ENCODE measurements at regions of chr19 and their contacts with region 1.

Region 1: GRCh38 chr19:44845612-44846454 is at the start of gene NECTIN2:
- DNase-seq: peak; percentile 68
- ATAC-seq: peak; percentile 73
- H3K4me3 Mint-ChIP-seq: peak within 1 kb of the TSS; percentile 89
- H3K27ac Mint-ChIP-seq: peak within 1 kb of the TSS; percentile 38
- H3K4me1 Mint-ChIP-seq: peaks cover 31% of the 10 kb centered on the region
- H3K27me3 Mint-ChIP-seq: peaks cover 32% of the 10 kb centered on the region
- CTCF ChIP-seq: no peak
- total RNA-seq, gene NECTIN2: 0.17 and 0.35 TPM in 2 replicates

Region 2: GRCh38 chr19:43675269-43675879 is 1170.5 kb before region 1 on chr19:
- CTCF ChIA-PET with region 1: no interaction called
- POLR2A ChIA-PET with region 1: interaction called, 12 read pairs
- intact Hi-C with region 1: no loop called
- DNase-seq: no peak
- ATAC-seq: no peak
- H3K4me3 Mint-ChIP-seq: no peak overlapping the region
- H3K27ac Mint-ChIP-seq: no peak overlapping the region
- H3K4me1 Mint-ChIP-seq: peaks cover 4% of the 10 kb centered on the region
- H3K27me3 Mint-ChIP-seq: no peaks in the 10 kb centered on the region
- CTCF ChIP-seq: no peak

Region 3: GRCh38 chr19:44653977-44654774 is 191.7 kb before region 1 on chr19:
- CTCF ChIA-PET with region 1: interaction called, 3 read pairs
- POLR2A ChIA-PET with region 1: no interaction called
- intact Hi-C with region 1: loop called (anchors 1 kb)
- DNase-seq: peak; percentile 62
- ATAC-seq: peak; percentile 94
- H3K4me3 Mint-ChIP-seq: no peak overlapping the region
- H3K27ac Mint-ChIP-seq: peak overlapping the region; percentile 53
- H3K4me1 Mint-ChIP-seq: peaks cover 21% of the 10 kb centered on the region
- H3K27me3 Mint-ChIP-seq: no peaks in the 10 kb centered on the region
- CTCF ChIP-seq: no peak

Region 4: DNA sequence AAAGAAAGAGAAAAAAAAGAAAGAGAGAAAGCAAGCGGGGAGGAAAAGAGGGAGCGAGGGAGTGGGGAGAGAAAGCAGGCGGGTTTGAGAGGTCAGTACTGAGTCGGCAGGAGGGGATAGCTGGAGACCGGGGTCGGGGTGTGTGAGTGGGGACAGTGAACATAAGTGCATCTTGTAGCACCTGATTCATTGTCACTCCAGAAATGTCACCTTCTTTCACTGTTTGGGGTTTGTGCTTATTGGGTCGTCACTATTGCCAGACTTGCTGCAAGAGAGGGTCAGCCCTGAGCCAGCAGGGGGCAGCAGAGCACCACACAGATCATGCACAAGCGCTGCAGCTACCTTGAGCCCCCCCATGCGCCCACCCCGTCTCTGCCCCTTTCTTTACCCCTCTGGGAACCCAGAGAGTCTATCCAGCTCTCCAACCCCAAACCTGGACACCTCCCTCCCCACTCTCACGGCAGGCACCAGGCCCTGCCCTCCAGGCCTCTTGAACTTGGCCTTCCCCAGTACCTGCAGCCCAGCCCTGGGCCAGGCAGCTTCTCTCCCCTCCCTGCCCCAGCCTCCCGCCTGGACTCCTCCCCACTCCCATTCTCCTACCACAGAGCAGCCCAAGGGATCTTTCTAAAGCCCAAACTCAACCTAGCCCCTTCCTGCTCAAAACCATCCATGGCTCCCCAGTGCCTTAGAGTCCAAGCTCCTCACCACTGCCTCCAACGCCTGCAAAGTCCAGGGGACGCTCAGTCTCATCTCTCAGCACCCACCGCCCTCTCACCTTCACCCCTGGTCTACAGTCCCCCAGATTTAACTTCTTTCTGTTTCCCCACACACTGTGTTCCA is 156.6 kb before region 1 on chr19:
- CTCF ChIA-PET with region 1: interaction called, 6 read pairs
- POLR2A ChIA-PET with region 1: no interaction called
- intact Hi-C with region 1: loop called (anchors 1 kb)
- DNase-seq: peak; percentile 73
- ATAC-seq: peak; percentile 51
- H3K4me3 Mint-ChIP-seq: no peak overlapping the region
- H3K27ac Mint-ChIP-seq: no peak overlapping the region
- H3K4me1 Mint-ChIP-seq: peaks cover 51% of the 10 kb centered on the region
- H3K27me3 Mint-ChIP-seq: peaks cover 11% of the 10 kb centered on the region
- CTCF ChIP-seq: no peak

Region 5: GRCh38 chr19:44782729-44783128 is 63.1 kb before region 1 on chr19:
- CTCF ChIA-PET with region 1: no interaction called
- POLR2A ChIA-PET with region 1: no interaction called
- intact Hi-C with region 1: loop called (anchors 1 kb)
- DNase-seq: no peak
- ATAC-seq: no peak
- H3K4me3 Mint-ChIP-seq: no peak overlapping the region
- H3K27ac Mint-ChIP-seq: no peak overlapping the region
- H3K4me1 Mint-ChIP-seq: peaks cover 6% of the 10 kb centered on the region
- H3K27me3 Mint-ChIP-seq: peaks cover 7% of the 10 kb centered on the region
- CTCF ChIP-seq: no peak

Region 6: GRCh38 chr19:44800461-44800860 is 45.4 kb before region 1 on chr19:
- CTCF ChIA-PET with region 1: no interaction called
- POLR2A ChIA-PET with region 1: no interaction called
- intact Hi-C with region 1: loop called (anchors 2 kb)
- DNase-seq: peak; percentile 70
- ATAC-seq: peak; percentile 92
- H3K4me3 Mint-ChIP-seq: no peak overlapping the region
- H3K27ac Mint-ChIP-seq: no peak overlapping the region
- H3K4me1 Mint-ChIP-seq: peaks cover 8% of the 10 kb centered on the region
- H3K27me3 Mint-ChIP-seq: peaks cover 16% of the 10 kb centered on the region
- CTCF ChIP-seq: no peak